ENCODE measurements at regions of chr3 and their contacts with region 1.

Region 1: DNA sequence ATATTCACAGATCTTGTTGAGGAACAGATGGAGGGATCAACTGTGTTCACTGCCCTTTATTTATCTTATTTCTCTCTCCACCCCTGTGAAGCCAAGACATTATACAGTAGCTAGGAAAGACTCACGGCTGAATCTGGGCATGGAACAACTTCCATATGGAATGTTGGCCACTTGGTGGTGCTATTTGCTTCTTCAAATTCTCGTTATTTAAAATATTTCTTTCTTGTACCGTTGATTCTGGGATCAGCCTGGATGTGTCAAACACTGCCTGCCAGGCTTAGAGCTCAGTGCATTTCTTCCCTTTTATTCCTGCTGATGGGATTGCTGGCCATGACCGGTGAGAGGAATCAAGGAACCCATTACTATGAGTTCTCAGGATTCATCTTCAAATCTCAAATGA is 17.5 kb upstream of the GASK1A start:
- DNase-seq: peak; percentile 7
- H3K4me3 ChIP-seq: no peak overlapping the region
- H3K27ac ChIP-seq: no peak overlapping the region
- H3K27me3 ChIP-seq: no peaks in the 10 kb centered on the region
- CTCF ChIP-seq: peak; percentile 61

Region 2: GRCh38 chr3:42880601-42881451 is 80.8 kb before region 1 on chr3:
- CTCF ChIA-PET with region 1: no interaction called
- POLR2A ChIA-PET with region 1: no interaction called
- DNase-seq: peak; percentile 23
- H3K4me3 ChIP-seq: peak overlapping the region; percentile 65
- H3K27ac ChIP-seq: no peak overlapping the region
- H3K27me3 ChIP-seq: peaks cover 7% of the 10 kb centered on the region
- CTCF ChIP-seq: peak; percentile 83

Region 3: DNA sequence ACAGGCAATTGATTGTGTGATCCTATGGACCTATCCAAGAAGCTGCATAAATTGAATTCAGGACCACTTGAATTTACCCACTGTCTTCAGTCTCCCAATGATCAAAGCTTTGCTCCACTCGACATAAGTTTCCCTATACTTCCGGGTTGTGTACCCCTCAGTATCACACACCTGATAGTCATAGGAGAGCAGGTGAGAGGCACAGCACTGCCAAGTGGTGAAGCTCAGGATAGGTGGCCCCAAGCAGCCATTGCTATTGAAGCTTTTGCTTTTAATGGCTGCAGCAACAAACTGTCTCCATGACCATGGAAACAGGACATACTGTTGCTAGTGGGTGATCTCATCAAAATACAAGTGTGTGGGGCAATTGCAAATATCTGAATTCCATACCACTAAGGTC is 45.2 kb after region 1 on chr3:
- CTCF ChIA-PET with region 1: interaction called, 13 read pairs
- POLR2A ChIA-PET with region 1: no interaction called
- DNase-seq: no peak
- H3K4me3 ChIP-seq: no peak overlapping the region
- H3K27ac ChIP-seq: no peak overlapping the region
- H3K27me3 ChIP-seq: no peaks in the 10 kb centered on the region
- CTCF ChIP-seq: no peak

Region 4: GRCh38 chr3:43062564-43063040 is 101.0 kb after region 1 on chr3:
- CTCF ChIA-PET with region 1: no interaction called
- POLR2A ChIA-PET with region 1: no interaction called
- DNase-seq: no peak
- H3K4me3 ChIP-seq: no peak overlapping the region
- H3K27ac ChIP-seq: no peak overlapping the region
- H3K27me3 ChIP-seq: no peaks in the 10 kb centered on the region
- CTCF ChIP-seq: no peak

Region 5: GRCh38 chr3:43120937-43121336 is 159.3 kb after region 1 on chr3:
- CTCF ChIA-PET with region 1: interaction called, 14 read pairs
- POLR2A ChIA-PET with region 1: no interaction called
- DNase-seq: no peak
- H3K4me3 ChIP-seq: no peak overlapping the region
- H3K27ac ChIP-seq: no peak overlapping the region
- H3K27me3 ChIP-seq: peaks cover 7% of the 10 kb centered on the region
- CTCF ChIP-seq: no peak

Region 6: DNA sequence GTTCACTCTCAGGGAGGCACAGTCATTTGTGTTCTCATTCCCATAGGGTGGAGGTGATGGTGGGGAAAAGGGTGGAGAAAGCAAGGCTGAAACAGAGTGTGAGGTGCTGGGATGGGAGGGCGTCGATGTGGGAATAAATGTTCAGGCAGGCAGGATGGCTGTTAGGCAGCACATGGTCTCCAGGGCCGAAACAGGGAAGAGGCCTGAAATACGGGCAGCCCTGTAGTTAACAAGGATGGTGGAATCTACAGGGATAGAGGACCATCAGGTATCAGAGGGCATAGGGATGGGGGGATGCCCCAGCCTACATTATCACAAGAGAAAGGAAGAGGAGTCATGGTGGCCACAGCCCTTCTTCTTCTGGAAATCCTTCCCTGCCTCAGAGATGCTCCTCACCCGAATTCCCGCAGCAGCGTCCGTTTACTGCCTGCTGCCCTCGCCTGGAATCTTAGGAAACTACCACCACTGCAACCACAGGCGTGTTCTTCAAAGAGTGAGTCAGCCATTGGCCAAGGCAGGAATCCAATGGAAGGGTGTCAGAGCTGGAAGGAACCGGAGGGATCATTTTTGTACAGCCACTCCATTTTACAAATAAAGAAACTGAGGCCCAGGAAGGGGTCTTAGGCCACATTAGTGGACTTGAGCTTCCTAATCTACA is 194.0 kb after region 1 on chr3:
- CTCF ChIA-PET with region 1: interaction called, 208 read pairs
- POLR2A ChIA-PET with region 1: interaction called, 6 read pairs
- DNase-seq: peak; percentile 53
- H3K4me3 ChIP-seq: no peak overlapping the region
- H3K27ac ChIP-seq: no peak overlapping the region
- H3K27me3 ChIP-seq: peaks cover 4% of the 10 kb centered on the region
- CTCF ChIP-seq: peak; percentile 78

Region 7: DNA sequence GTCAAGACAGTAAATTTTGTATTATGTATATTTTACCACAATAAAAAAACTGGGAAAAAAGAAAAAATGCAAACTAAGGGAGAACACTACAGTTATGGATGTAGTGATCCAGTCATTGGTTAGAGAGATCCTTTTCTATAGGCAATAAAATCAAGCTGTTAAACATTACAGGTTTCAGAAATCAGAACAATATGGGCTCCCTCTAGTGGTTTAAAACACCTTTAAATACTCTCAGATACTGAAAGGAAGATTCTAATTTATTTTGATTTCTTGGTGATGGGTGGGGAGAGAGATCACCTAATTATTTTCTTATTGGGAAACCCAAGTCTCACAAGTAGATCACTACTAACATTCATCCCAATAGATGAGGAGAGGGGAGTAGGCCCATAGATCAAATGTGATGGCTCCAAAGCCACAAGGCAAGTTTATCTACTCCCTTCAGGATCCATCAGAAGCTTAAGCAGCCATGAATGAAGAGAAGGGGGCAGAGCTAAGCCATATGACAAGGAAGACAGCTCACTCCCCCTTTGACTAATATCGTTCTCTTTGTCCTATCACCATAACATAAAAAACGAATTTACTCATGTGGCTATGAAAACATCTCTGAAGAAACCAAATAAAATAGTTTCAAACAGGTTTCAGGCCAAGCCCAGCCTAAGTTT is 541.6 kb after region 1 on chr3:
- CTCF ChIA-PET with region 1: interaction called, 20 read pairs
- POLR2A ChIA-PET with region 1: no interaction called
- DNase-seq: no peak
- H3K4me3 ChIP-seq: no peak overlapping the region
- H3K27ac ChIP-seq: no peak overlapping the region
- H3K27me3 ChIP-seq: no peaks in the 10 kb centered on the region
- CTCF ChIP-seq: peak; percentile 56